CD4-positive, alpha-beta memory T cell (primary cell): ENCODE measurements at regions of chr22 and their contacts with region 1.

Region 1: GRCh38 chr22:18077639-18078328 is at the start of gene PEX26:
- DNase-seq: peak; percentile 93 to 98 (median 95)
- H3K4me3 ChIP-seq: peak within 1 kb of the TSS; percentile 72 to 86
- H3K4me3 Mint-ChIP-seq: peak within 1 kb of the TSS; percentile 92 to 99 (median 97)
- H3K27ac ChIP-seq: peak within 1 kb of the TSS; percentile 72
- H3K27ac Mint-ChIP-seq: peak within 1 kb of the TSS; percentile 86 to 100 (median 98)
- H3K4me1 ChIP-seq: peaks cover 35% of the 10 kb centered on the region
- H3K4me1 Mint-ChIP-seq: peaks cover 37 to 59% (median 47%) of the 10 kb centered on the region in 4 donors
- H3K27me3 ChIP-seq: no peaks in the 10 kb centered on the region
- H3K27me3 Mint-ChIP-seq: no peaks in the 10 kb centered on the region
- total RNA-seq, gene PEX26: 39.1 to 39.6 TPM

Region 2: DNA sequence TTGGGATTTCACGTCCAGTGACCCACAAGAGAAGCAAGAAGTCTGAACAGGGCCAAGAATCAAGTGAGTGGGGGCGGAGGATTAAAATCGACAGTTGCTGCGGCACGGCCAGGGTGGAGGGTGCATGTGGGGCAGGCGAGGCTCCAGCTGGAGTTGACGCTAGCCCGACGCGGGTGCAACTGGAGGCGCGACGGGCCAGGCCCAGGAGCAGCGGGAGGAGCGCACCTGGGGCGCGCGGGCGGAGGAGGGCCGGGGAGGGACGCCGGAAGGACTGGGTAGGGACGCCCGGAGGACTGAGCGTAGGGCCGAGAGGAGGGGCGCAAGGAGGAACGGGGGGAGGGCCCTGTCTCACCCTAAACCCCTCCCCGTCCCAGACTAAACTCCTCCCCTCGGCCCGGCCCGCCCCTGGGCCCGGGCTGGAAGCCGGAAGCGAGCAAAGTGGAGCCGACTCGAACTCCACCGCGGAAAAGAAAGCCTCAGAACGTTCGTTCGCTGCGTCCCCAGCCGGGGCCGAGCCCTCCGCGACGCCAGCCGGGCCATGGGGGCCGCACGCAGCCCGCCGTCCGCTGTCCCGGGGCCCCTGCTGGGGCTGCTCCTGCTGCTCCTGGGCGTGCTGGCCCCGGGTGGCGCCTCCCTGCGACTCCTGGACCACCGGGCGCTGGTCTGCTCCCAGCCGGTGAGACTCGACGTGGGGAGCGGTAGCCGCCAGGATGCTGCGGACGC is 993.1 kb before region 1 on chr22 and contains the start of gene IL17RA:
- CTCF ChIA-PET with region 1: interaction called, 3 read pairs
- POLR2A ChIA-PET with region 1: no interaction called
- intact Hi-C with region 1: loop called (anchors 2 kb)
- DNase-seq: peak; percentile 92 to 97 (median 94)
- H3K4me3 ChIP-seq: peak within 1 kb of the TSS; percentile 58 to 86
- H3K4me3 Mint-ChIP-seq: peak within 1 kb of the TSS; percentile 88 to 99 (median 96)
- H3K27ac ChIP-seq: peak within 1 kb of the TSS; percentile 86
- H3K27ac Mint-ChIP-seq: peak within 1 kb of the TSS; percentile 93 to 97 (median 95)
- H3K4me1 ChIP-seq: peaks cover 47% of the 10 kb centered on the region
- H3K4me1 Mint-ChIP-seq: peaks cover 29 to 50% (median 41%) of the 10 kb centered on the region in 4 donors
- H3K27me3 ChIP-seq: no peaks in the 10 kb centered on the region
- H3K27me3 Mint-ChIP-seq: no peaks in the 10 kb centered on the region
- total RNA-seq, gene IL17RA: 71.6 to 77.2 TPM

Region 3: GRCh38 chr22:17742527-17742902 is 335.3 kb before region 1 on chr22:
- CTCF ChIA-PET with region 1: interaction called, 23 read pairs
- POLR2A ChIA-PET with region 1: interaction called, 6 read pairs
- intact Hi-C with region 1: no loop called
- DNase-seq: peak; percentile 51 to 65 (median 57)
- H3K4me3 ChIP-seq: no peak overlapping the region
- H3K4me3 Mint-ChIP-seq: no peak overlapping the region
- H3K27ac ChIP-seq: no peak overlapping the region
- H3K27ac Mint-ChIP-seq: peak overlapping the region in 3 of 7 donors; percentile 24 to 62 (median 27)
- H3K4me1 ChIP-seq: no peaks in the 10 kb centered on the region
- H3K4me1 Mint-ChIP-seq: peaks cover 2 to 15% (median 5%) of the 10 kb centered on the region in 4 donors
- H3K27me3 ChIP-seq: no peaks in the 10 kb centered on the region
- H3K27me3 Mint-ChIP-seq: no peaks in the 10 kb centered on the region

Region 4: DNA sequence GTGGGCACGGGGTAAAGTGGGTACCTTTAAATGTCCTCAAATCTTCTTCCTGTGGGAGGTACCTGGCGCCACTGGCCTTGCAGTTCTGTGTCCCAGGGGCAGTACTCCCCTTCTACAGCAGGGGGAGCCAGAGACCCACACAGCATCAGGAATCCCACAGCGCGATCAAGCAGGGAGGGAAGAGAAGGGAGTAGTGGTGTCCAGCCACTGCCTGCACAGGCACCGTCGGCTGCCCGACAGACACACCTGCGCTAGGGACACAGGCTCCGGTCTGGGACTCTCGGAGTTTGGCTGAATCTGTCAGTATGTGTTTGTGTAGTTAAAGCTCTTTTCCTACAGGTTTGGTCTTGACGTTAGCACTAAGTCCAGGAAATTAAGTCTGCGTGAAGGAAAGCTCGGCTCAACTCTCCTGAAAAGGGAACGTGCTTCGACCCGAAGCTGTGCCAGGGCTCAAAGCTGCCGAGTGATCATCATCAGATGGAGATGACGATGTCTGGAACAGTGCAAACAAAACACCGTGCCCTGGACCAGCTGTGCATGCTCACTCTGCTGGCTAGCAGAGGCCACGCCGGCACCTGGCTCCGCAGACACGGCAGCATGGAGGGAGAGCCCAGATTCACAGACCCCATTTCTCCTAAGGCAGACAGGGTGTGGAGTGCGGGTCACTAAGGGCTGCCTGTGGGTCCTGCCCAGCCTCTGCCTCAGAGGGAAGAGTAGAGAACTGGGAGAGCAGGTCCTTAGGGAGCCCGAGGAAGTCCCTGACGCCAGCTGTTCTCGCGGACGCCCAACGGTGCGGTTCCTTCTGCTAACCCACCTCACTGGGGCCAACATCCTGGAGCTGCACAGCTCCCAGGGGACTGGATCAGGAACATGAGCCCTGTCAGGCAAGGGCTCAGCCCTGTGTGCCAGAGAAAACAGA is 247.5 kb before region 1 on chr22:
- CTCF ChIA-PET with region 1: interaction called, 226 read pairs
- POLR2A ChIA-PET with region 1: interaction called, 26 read pairs
- intact Hi-C with region 1: loop called (anchors 1 kb)
- DNase-seq: peak; percentile 75 to 82 (median 78)
- H3K4me3 ChIP-seq: no peak overlapping the region
- H3K4me3 Mint-ChIP-seq: no peak overlapping the region
- H3K27ac ChIP-seq: no peak overlapping the region
- H3K27ac Mint-ChIP-seq: peak overlapping the region in 3 of 7 donors; percentile 9 to 42 (median 35)
- H3K4me1 ChIP-seq: peaks cover 4% of the 10 kb centered on the region
- H3K4me1 Mint-ChIP-seq: peaks cover 5 to 10% (median 8%) of the 10 kb centered on the region in 4 donors
- H3K27me3 ChIP-seq: no peaks in the 10 kb centered on the region
- H3K27me3 Mint-ChIP-seq: no peaks in the 10 kb centered on the region

Region 5: DNA sequence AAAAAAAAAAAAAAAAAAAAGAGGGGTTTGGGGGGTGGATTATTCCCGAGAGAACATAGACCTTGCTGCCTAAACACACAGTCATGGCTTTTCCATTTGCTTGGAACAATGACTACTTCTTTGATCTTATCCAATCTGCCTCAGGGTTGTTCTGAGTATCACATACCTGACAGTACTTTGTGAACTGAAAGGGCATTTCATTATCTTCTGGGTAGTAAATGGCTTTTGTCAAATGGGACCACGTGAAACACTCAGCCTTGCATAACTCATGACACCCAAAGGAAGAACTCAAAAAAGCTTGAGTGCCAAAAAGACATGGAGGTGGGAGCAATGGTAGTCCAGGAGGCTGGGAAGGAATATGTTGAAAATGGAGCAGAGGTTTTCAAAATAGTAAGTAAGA is 180.4 kb before region 1 on chr22:
- CTCF ChIA-PET with region 1: no interaction called
- POLR2A ChIA-PET with region 1: no interaction called
- intact Hi-C with region 1: no loop called
- DNase-seq: no peak
- H3K4me3 ChIP-seq: no peak overlapping the region
- H3K4me3 Mint-ChIP-seq: no peak overlapping the region
- H3K27ac ChIP-seq: no peak overlapping the region
- H3K27ac Mint-ChIP-seq: peak overlapping the region in 1 of 7 donors; percentile 3
- H3K4me1 ChIP-seq: no peaks in the 10 kb centered on the region
- H3K4me1 Mint-ChIP-seq: peaks cover 0 to 2% (median 0%) of the 10 kb centered on the region in 4 donors
- H3K27me3 ChIP-seq: no peaks in the 10 kb centered on the region
- H3K27me3 Mint-ChIP-seq: no peaks in the 10 kb centered on the region

Region 6: GRCh38 chr22:18001040-18001893 is 76.5 kb before region 1 on chr22:
- CTCF ChIA-PET with region 1: interaction called, 13 read pairs
- POLR2A ChIA-PET with region 1: interaction called, 28 read pairs
- intact Hi-C with region 1: loop called (anchors 2 kb)
- DNase-seq: peak; percentile 51 to 75 (median 73)
- H3K4me3 ChIP-seq: peak overlapping the region; percentile 53 to 73
- H3K4me3 Mint-ChIP-seq: peak overlapping the region; percentile 92 to 99 (median 96)
- H3K27ac ChIP-seq: peak overlapping the region; percentile 74
- H3K27ac Mint-ChIP-seq: peak overlapping the region; percentile 78 to 98 (median 95)
- H3K4me1 ChIP-seq: peaks cover 47% of the 10 kb centered on the region
- H3K4me1 Mint-ChIP-seq: peaks cover 25 to 58% (median 44%) of the 10 kb centered on the region in 4 donors
- H3K27me3 ChIP-seq: no peaks in the 10 kb centered on the region
- H3K27me3 Mint-ChIP-seq: no peaks in the 10 kb centered on the region

Region 7: DNA sequence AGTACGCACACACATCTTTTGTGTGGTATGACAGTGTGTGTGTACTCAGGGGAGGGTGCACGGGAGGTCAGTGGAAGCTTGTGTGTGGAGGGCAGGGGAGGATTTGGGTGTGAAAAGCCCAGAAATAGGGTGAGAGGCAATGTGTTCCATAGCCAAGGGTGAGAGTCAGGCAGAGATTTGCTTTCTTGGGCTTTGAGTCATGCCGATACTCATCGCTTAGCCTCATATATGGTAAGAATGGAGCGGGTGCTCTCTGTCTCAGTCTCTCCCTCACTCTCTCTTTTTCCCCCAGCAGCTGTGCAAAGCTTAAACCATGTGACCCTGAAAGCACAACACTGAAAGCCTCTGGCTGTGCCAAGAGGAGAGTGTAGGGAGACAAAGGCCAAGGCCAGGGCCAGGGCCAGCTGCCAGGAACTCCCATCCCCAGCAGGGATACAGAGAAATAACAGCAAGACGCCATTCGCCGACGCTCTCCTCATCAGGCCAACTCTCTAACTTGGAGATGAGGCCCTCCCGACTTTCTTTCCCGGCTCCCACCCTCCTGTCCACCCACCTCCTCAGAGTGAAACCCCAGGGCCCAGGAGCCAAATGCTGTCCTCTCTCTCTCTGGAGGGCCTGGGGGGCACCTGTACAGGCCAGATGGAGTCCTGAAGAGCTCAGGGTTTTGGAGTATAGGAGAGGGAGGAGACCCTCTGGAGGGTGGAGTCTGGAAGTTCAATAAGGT is 33.1 kb before region 1 on chr22:
- CTCF ChIA-PET with region 1: no interaction called
- POLR2A ChIA-PET with region 1: no interaction called
- intact Hi-C with region 1: no loop called
- DNase-seq: no peak
- H3K4me3 ChIP-seq: no peak overlapping the region
- H3K4me3 Mint-ChIP-seq: no peak overlapping the region
- H3K27ac ChIP-seq: no peak overlapping the region
- H3K27ac Mint-ChIP-seq: peak overlapping the region in 1 of 7 donors; percentile 57
- H3K4me1 ChIP-seq: no peaks in the 10 kb centered on the region
- H3K4me1 Mint-ChIP-seq: peaks cover 0 to 2% (median 0%) of the 10 kb centered on the region in 4 donors
- H3K27me3 ChIP-seq: no peaks in the 10 kb centered on the region
- H3K27me3 Mint-ChIP-seq: peaks cover 0 to 9% of the 10 kb centered on the region in 2 donors

Region 8: DNA sequence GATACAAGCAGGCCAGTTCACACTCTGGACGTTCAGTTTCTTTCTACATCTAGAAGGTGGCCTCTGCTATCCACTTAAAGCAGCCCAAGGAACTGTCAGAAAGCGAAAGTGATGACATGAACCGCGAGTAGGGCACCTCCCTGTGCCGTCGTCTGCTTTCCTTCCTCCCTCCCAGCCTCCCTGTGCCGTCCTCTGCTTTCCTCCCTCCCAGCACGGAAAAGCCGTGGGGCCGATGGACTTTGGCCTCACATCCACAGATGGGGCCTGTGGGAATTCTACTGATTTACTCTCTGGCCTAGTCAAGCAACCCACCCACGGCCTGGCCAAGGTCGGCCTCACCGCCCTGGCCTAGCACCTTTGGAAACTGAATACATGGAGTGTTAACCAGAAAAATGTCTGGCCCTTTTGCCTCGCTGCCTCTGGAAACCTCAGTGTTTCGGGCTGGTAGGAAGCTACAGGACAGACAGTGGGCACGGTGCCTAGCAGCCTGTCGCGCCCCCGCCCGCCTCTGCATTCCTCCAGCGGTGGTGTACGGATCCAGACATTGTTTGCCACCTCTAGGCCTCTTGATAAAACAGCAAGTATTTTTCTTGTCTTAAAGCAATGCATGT is 14.2 kb after region 1 on chr22:
- CTCF ChIA-PET with region 1: interaction called, 8 read pairs
- POLR2A ChIA-PET with region 1: interaction called, 37 read pairs
- intact Hi-C with region 1: loop called (anchors 1 kb)
- DNase-seq: peak; percentile 44 to 59 (median 48)
- H3K4me3 ChIP-seq: peak overlapping the region in 1 of 2 donors; percentile 58
- H3K4me3 Mint-ChIP-seq: peak overlapping the region; percentile 89 to 100 (median 94)
- H3K27ac ChIP-seq: peak overlapping the region; percentile 76
- H3K27ac Mint-ChIP-seq: peak overlapping the region; percentile 97 to 100 (median 99)
- H3K4me1 ChIP-seq: peaks cover 23% of the 10 kb centered on the region
- H3K4me1 Mint-ChIP-seq: peaks cover 9 to 37% (median 23%) of the 10 kb centered on the region in 4 donors
- H3K27me3 ChIP-seq: no peaks in the 10 kb centered on the region
- H3K27me3 Mint-ChIP-seq: no peaks in the 10 kb centered on the region

Region 9: GRCh38 chr22:18121950-18122544 is 44.3 kb after region 1 on chr22:
- CTCF ChIA-PET with region 1: no interaction called
- POLR2A ChIA-PET with region 1: no interaction called
- intact Hi-C with region 1: no loop called
- DNase-seq: no peak
- H3K4me3 ChIP-seq: no peak overlapping the region
- H3K4me3 Mint-ChIP-seq: no peak overlapping the region
- H3K27ac ChIP-seq: no peak overlapping the region
- H3K27ac Mint-ChIP-seq: no peak overlapping the region
- H3K4me1 ChIP-seq: no peaks in the 10 kb centered on the region
- H3K4me1 Mint-ChIP-seq: peaks cover 0 to 10% (median 1%) of the 10 kb centered on the region in 4 donors
- H3K27me3 ChIP-seq: no peaks in the 10 kb centered on the region
- H3K27me3 Mint-ChIP-seq: peaks cover 0 to 2% of the 10 kb centered on the region in 2 donors

Region 10: GRCh38 chr22:18152519-18152918 is 74.7 kb after region 1 on chr22:
- CTCF ChIA-PET with region 1: interaction called, 6 read pairs
- POLR2A ChIA-PET with region 1: interaction called, 15 read pairs
- intact Hi-C with region 1: loop called (anchors 2 kb)
- DNase-seq: peak in 1 of 5 donors; percentile 9
- H3K4me3 ChIP-seq: no peak overlapping the region
- H3K4me3 Mint-ChIP-seq: peak overlapping the region; percentile 48 to 91 (median 72)
- H3K27ac ChIP-seq: no peak overlapping the region
- H3K27ac Mint-ChIP-seq: peak overlapping the region; percentile 59 to 85 (median 79)
- H3K4me1 ChIP-seq: peaks cover 22% of the 10 kb centered on the region
- H3K4me1 Mint-ChIP-seq: peaks cover 22 to 49% (median 38%) of the 10 kb centered on the region in 4 donors
- H3K27me3 ChIP-seq: no peaks in the 10 kb centered on the region
- H3K27me3 Mint-ChIP-seq: no peaks in the 10 kb centered on the region